ENCODE measurements at regions of chr17 and their contacts with region 1.

Region 1: DNA sequence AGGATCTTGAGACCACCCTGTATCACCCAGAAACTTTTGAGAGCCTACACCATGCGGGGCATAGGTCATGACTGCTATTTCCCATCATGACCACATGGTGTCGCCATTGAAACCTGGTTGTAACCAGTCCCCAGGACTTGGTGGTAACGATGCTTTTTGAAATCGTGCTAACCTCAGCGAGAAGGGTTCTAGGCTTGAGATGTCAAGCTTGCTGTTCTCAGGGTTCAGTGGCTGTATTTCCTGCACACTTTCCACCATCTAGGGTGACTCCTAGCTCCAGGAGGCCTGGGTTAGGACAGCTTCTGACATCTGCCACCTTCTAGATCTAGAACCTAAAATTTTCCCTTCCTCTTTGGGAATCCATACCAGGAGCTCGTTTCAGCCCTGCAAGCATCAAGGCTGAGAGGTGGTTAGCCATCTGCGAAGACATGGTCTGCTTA is 13.0 kb upstream of the SPNS3 start:
- DNase-seq: peak; percentile 95
- H3K4me3 ChIP-seq: no peak overlapping the region
- H3K27ac ChIP-seq: peak overlapping the region; percentile 45
- H3K4me1 ChIP-seq: peaks cover 30% of the 10 kb centered on the region
- CTCF ChIP-seq: peak; percentile 90

Region 2: GRCh38 chr17:4497101-4497824 is 76.6 kb after region 1 on chr17:
- CTCF ChIA-PET with region 1: no interaction called
- POLR2A ChIA-PET with region 1: interaction called, 4 read pairs
- intact Hi-C with region 1: loop called (anchors 1 kb)
- DNase-seq: peak; percentile 69
- H3K4me3 ChIP-seq: peak overlapping the region; percentile 13
- H3K27ac ChIP-seq: peak overlapping the region; percentile 26
- H3K4me1 ChIP-seq: peaks cover 54% of the 10 kb centered on the region
- CTCF ChIP-seq: no peak

Region 3: GRCh38 chr17:4522661-4523060 is 101.9 kb after region 1 on chr17:
- CTCF ChIA-PET with region 1: interaction called, 3 read pairs
- POLR2A ChIA-PET with region 1: interaction called, 3 read pairs
- intact Hi-C with region 1: loop called (anchors 2 kb)
- DNase-seq: no peak
- H3K4me3 ChIP-seq: peak overlapping the region; percentile 64
- H3K27ac ChIP-seq: peak overlapping the region; percentile 90
- H3K4me1 ChIP-seq: peaks cover 68% of the 10 kb centered on the region
- CTCF ChIP-seq: no peak

Region 4: GRCh38 chr17:4554997-4555799 is 134.5 kb after region 1 on chr17 and contains the start of gene MYBBP1A:
- CTCF ChIA-PET with region 1: interaction called, 3 read pairs
- POLR2A ChIA-PET with region 1: interaction called, 3 read pairs
- intact Hi-C with region 1: loop called (anchors 2 kb)
- DNase-seq: peak; percentile 98
- H3K4me3 ChIP-seq: peak within 1 kb of the TSS; percentile 96
- H3K27ac ChIP-seq: peak within 1 kb of the TSS; percentile 68
- H3K4me1 ChIP-seq: peaks cover 26% of the 10 kb centered on the region
- CTCF ChIP-seq: peak; percentile 33
- total RNA-seq, gene MYBBP1A: 137 and 142 TPM in 2 replicates

Region 5: GRCh38 chr17:4565209-4566141 is 144.8 kb after region 1 on chr17:
- CTCF ChIA-PET with region 1: interaction called, 4 read pairs
- POLR2A ChIA-PET with region 1: interaction called, 3 read pairs
- intact Hi-C with region 1: loop called (anchors 5 kb)
- DNase-seq: peak; percentile 88
- H3K4me3 ChIP-seq: peak overlapping the region; percentile 42
- H3K27ac ChIP-seq: no peak overlapping the region
- H3K4me1 ChIP-seq: peaks cover 32% of the 10 kb centered on the region
- CTCF ChIP-seq: peak; percentile 98

Region 6: GRCh38 chr17:4594931-4595684 is 174.4 kb after region 1 on chr17:
- CTCF ChIA-PET with region 1: no interaction called
- POLR2A ChIA-PET with region 1: no interaction called
- intact Hi-C with region 1: no loop called
- DNase-seq: peak; percentile 41
- H3K4me3 ChIP-seq: no peak overlapping the region
- H3K27ac ChIP-seq: no peak overlapping the region
- H3K4me1 ChIP-seq: no peaks in the 10 kb centered on the region
- CTCF ChIP-seq: peak; percentile 56

Region 7: GRCh38 chr17:4616476-4616875 is 195.8 kb after region 1 on chr17:
- CTCF ChIA-PET with region 1: no interaction called
- POLR2A ChIA-PET with region 1: no interaction called
- intact Hi-C with region 1: loop called (anchors 5 kb)
- DNase-seq: no peak
- H3K4me3 ChIP-seq: no peak overlapping the region
- H3K27ac ChIP-seq: no peak overlapping the region
- H3K4me1 ChIP-seq: no peaks in the 10 kb centered on the region
- CTCF ChIP-seq: no peak

Region 8: DNA sequence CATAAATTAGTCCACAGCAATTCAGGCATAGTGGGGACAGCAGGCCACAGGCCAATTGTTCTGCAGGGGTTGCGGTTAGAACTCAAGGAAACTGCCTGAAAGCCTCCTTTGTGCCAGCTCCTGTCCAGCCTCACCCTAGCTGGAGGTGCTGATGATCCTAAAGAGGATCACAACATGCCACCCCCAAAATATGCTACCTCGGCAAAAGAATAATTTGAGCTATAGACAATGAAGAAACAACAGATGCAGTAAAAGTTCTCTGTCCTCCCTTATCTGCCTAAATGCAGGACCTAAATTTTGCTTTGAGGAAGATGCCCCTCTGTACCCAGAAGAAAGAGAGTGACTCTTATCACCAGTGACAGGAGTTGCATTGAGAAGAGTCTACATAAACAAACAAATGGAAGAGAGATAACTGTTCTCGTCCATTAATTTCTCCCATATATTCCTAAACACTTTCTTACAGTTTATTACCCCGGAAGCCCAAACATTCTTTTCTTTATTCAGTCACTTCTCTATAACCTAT is 206.1 kb after region 1 on chr17:
- CTCF ChIA-PET with region 1: no interaction called
- POLR2A ChIA-PET with region 1: no interaction called
- intact Hi-C with region 1: loop called (anchors 2 kb)
- DNase-seq: no peak
- H3K4me3 ChIP-seq: no peak overlapping the region
- H3K27ac ChIP-seq: no peak overlapping the region
- H3K4me1 ChIP-seq: no peaks in the 10 kb centered on the region
- CTCF ChIP-seq: no peak